ENCODE measurements at regions of chr7 and their contacts with region 1.

Region 1: DNA sequence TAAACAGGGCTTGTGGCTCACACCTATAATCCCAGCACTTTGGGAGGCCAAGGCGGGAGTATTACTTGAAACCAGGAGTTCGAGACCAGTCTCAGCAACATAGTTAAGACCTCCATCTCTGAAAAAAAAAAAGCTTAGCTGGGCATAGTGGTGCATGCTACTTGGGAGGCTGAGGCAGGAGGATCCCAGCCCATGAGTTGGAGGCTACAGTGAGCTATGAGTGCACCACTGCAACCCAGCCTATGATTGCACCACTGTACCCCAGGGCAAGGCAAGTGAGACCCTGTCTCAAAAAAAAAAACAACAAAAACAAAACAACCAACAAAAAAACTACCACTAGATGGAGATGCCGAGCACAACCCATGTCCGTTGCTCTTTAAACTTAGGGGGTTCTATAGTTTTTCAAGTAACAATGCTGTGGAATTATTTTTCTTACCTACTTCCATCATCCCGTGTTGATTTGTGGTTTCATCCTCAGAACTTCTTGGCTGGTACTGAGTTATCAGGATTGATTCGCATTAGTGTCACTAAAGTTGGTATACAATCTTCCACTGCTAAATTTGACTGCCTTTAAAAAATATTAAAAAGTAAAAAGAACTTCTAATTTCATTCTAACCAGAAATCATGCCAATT is 12.2 kb upstream of the REPIN1 start:
- DNase-seq: no peak
- H3K4me3 ChIP-seq: no peak overlapping the region
- H3K27ac ChIP-seq: no peak overlapping the region
- H3K4me1 ChIP-seq: no peaks in the 10 kb centered on the region
- H3K27me3 ChIP-seq: no peaks in the 10 kb centered on the region
- CTCF ChIP-seq: peak; percentile 4 to 60 (median 42)

Region 2: GRCh38 chr7:149509774-149510173 is 846.6 kb before region 1 on chr7:
- intact Hi-C with region 1: no loop called
- DNase-seq: no peak
- H3K4me3 ChIP-seq: no peak overlapping the region
- H3K27ac ChIP-seq: no peak overlapping the region
- H3K4me1 ChIP-seq: no peaks in the 10 kb centered on the region
- H3K27me3 ChIP-seq: no peaks in the 10 kb centered on the region
- CTCF ChIP-seq: no peak

Region 3: DNA sequence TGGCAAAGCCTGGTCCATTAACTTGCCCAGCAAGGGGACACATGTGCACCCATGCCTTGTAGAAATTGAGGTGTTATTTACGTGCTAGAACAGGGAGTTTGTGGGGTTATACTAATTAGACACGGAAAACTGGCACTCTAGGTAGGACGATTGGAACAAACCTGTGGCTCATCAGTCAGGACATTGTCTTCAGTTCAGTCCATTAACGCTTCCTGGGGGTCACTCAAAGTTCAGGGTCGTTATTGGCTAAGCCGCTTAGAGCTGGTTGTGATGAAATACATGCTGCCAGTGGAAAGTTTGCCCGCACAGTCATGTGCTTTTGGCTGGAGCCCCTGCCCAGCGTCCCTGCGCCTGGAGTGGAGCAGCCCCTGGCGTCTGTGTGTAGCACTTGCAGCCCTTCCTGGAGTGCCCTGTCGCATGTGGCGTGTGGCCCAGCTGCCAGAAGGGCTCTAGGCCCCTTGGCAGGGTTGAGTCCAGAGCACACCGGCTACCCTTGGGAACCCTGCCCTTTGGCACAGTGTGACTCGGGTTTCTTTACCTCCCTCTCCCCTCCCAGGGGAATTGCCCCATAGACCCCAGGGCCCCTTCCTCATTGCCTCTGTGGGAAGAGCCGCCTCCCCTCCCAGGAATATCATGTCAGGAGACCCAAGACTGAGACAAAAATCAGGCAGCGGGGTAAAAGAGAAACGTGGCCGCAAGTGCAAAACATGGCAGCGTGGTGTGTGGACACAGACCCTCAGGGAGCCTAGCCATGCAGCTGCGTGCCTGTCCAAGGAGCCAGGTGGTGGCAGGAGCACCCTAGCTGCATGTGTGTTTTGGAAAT is 32.5 kb after region 1 on chr7:
- intact Hi-C with region 1: loop called (anchors 1 kb)
- DNase-seq: peak in 1 of 2 donors; percentile 77
- H3K4me3 ChIP-seq: no peak overlapping the region
- H3K27ac ChIP-seq: no peak overlapping the region
- H3K4me1 ChIP-seq: peaks cover 0 to 2% of the 10 kb centered on the region in 2 donors
- H3K27me3 ChIP-seq: no peaks in the 10 kb centered on the region
- CTCF ChIP-seq: peak; percentile 60 to 69 (median 69)

Region 4: DNA sequence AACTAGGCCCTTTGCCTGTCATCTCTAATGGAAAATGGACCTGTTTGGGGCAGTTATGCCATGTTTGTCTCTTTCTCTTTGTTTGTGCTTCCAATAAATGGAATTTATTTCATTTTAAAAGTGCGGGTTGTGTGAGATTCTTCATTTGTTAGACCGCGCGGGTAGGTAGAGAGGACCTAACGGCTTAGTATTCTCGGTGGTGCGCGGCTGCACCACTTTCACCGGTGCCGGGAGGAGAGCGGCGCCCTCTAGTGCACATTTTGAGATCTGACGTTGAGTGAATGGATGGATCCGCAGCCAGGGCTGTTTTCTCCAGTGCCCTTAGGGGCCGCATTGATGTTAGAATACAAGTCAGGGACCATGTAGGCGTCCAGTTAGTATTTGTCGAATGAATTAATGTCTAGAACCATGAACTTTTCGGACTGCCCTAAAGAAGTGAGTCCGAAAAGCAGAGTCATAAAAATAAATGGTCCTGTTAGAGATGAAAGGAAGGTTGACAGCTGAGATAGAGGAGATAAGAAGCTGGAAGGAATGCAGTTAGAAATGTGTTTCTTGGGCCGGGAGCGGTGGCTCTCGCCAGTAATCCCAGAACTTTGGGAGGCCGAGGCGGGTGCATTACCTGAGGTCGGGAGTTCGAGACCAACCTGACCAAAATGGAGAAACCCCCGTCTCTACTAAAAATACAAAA is 64.8 kb after region 1 on chr7:
- intact Hi-C with region 1: loop called (anchors 1 kb)
- DNase-seq: peak in 1 of 2 donors; percentile 87
- H3K4me3 ChIP-seq: no peak overlapping the region
- H3K27ac ChIP-seq: no peak overlapping the region
- H3K4me1 ChIP-seq: no peaks in the 10 kb centered on the region
- H3K27me3 ChIP-seq: no peaks in the 10 kb centered on the region
- CTCF ChIP-seq: peak; percentile 74 to 87 (median 78)

Measured in ascending aorta (tissue), 2 donors.